CD4-positive, alpha-beta T cell (primary cell): ENCODE measurements at regions of chr9 and their contacts with region 1.

Region 1: GRCh38 chr9:18935541-18935940 is 97.5 kb downstream of the SAXO1 start:
- DNase-seq: no peak
- ATAC-seq: no peak
- H3K4me3 ChIP-seq: no peak overlapping the region
- H3K4me3 Mint-ChIP-seq: no peak overlapping the region
- H3K27ac ChIP-seq: no peak overlapping the region
- H3K27ac Mint-ChIP-seq: no peak overlapping the region
- H3K4me1 ChIP-seq: no peaks in the 10 kb centered on the region
- H3K4me1 Mint-ChIP-seq: no peaks in the 10 kb centered on the region
- H3K27me3 ChIP-seq: peaks cover 0 to 3% of the 10 kb centered on the region in 2 experiments
- H3K27me3 Mint-ChIP-seq: peaks cover 10% of the 10 kb centered on the region
- CTCF ChIP-seq: no peak

Region 2: DNA sequence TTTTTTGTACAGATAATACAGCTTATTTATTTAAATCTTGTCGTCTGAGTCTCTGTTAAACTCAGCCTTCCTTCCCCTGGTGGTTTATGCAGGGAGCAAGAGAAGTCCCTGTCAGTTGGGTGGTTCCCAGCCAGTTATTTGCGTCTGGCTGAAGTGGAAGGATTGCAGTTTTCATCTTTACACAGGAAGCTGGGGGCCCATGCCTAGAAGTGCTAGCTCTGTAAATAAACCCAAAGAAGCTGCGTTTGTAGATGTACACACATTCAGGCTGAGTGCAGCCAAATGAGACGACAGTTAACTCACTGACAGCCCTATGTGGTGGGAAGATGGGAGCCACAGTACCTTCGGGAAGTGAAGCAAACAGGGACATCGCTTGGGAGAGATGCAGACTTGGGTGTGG is 24.6 kb before region 1 on chr9:
- CTCF ChIA-PET with region 1: no interaction called
- POLR2A ChIA-PET with region 1: no interaction called
- intact Hi-C with region 1: loop called in 1 of 2 experiments (anchors 2 kb)
- DNase-seq: no peak
- ATAC-seq: no peak
- H3K4me3 ChIP-seq: no peak overlapping the region
- H3K4me3 Mint-ChIP-seq: no peak overlapping the region
- H3K27ac ChIP-seq: no peak overlapping the region
- H3K27ac Mint-ChIP-seq: no peak overlapping the region
- H3K4me1 ChIP-seq: no peaks in the 10 kb centered on the region
- H3K4me1 Mint-ChIP-seq: no peaks in the 10 kb centered on the region
- H3K27me3 ChIP-seq: no peaks in the 10 kb centered on the region
- H3K27me3 Mint-ChIP-seq: peaks cover 16% of the 10 kb centered on the region
- CTCF ChIP-seq: no peak